ENCODE measurements at regions of chr17 and their contacts with region 1.

Region 1: GRCh38 chr17:71830866-71831265 is 290.0 kb upstream of the SOX9 start:
- DNase-seq: no peak
- H3K4me3 ChIP-seq: no peak overlapping the region
- H3K27ac ChIP-seq: no peak overlapping the region
- H3K4me1 ChIP-seq: no peaks in the 10 kb centered on the region
- H3K27me3 ChIP-seq: no peaks in the 10 kb centered on the region
- CTCF ChIP-seq: no peak

Region 2: DNA sequence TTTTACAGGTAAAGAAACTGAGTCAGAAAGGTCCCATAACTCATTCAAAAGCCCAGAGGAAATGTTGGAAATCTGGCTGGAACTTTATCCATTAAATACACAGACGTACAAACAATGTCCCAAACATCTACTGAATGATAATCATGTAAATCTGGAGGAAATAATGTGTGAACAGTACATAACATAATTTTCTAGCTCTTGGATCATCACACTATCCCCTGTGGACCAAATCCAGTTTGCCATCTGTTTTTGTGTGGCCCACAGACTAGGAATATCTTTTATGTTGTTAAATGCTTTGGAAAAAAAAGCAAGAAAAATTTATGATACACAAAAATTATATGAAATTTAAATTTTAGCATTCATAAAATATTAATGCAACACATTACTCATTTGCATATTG is 100.0 kb before region 1 on chr17:
- CTCF ChIA-PET with region 1: no interaction called
- dilution Hi-C with region 1: loop called (anchors 5 kb)
- in situ Hi-C with region 1: no loop called
- intact Hi-C with region 1: no loop called
- DNase-seq: no peak
- H3K4me3 ChIP-seq: no peak overlapping the region
- H3K27ac ChIP-seq: no peak overlapping the region
- H3K4me1 ChIP-seq: no peaks in the 10 kb centered on the region
- H3K27me3 ChIP-seq: no peaks in the 10 kb centered on the region
- CTCF ChIP-seq: no peak

Region 3: DNA sequence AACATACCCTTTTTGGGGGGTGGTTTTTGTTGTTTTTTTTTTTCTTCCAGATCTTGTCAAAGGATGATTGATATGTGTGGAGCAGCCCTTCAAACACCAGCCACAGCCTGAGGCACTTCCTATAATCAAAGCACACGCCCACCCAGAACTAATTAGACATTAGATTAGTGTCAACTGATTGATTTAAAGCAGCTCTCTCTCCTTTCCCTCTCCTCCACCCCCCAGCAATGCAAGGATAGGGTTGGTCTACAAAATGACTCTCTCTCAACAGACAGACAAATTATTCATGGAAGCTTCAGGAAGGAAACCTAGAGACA is 39.6 kb after region 1 on chr17:
- CTCF ChIA-PET with region 1: no interaction called
- dilution Hi-C with region 1: no loop called
- in situ Hi-C with region 1: no loop called
- intact Hi-C with region 1: no loop called
- DNase-seq: no peak
- H3K4me3 ChIP-seq: no peak overlapping the region
- H3K27ac ChIP-seq: no peak overlapping the region
- H3K4me1 ChIP-seq: no peaks in the 10 kb centered on the region
- H3K27me3 ChIP-seq: no peaks in the 10 kb centered on the region
- CTCF ChIP-seq: no peak